CD4-positive, alpha-beta T cell (primary cell): ENCODE measurements at regions of chr1 and their contacts with region 1.

Region 1: GRCh38 chr1:108559215-108560186 is at the start of gene EEIG2:
- DNase-seq: peak; percentile 85 to 96 (median 90)
- ATAC-seq: peak; percentile 90
- H3K4me3 ChIP-seq: peak within 1 kb of the TSS; percentile 77
- H3K4me3 Mint-ChIP-seq: peak within 1 kb of the TSS; percentile 99
- H3K27ac ChIP-seq: peak within 1 kb of the TSS; percentile 57
- H3K27ac Mint-ChIP-seq: peak within 1 kb of the TSS; percentile 88
- H3K4me1 ChIP-seq: peaks cover 30% of the 10 kb centered on the region
- H3K4me1 Mint-ChIP-seq: peaks cover 47% of the 10 kb centered on the region
- H3K27me3 ChIP-seq: no peaks in the 10 kb centered on the region
- H3K27me3 Mint-ChIP-seq: no peaks in the 10 kb centered on the region
- CTCF ChIP-seq: peak; percentile 56
- total RNA-seq, gene EEIG2: 11.6 to 12.2 TPM

Region 2: DNA sequence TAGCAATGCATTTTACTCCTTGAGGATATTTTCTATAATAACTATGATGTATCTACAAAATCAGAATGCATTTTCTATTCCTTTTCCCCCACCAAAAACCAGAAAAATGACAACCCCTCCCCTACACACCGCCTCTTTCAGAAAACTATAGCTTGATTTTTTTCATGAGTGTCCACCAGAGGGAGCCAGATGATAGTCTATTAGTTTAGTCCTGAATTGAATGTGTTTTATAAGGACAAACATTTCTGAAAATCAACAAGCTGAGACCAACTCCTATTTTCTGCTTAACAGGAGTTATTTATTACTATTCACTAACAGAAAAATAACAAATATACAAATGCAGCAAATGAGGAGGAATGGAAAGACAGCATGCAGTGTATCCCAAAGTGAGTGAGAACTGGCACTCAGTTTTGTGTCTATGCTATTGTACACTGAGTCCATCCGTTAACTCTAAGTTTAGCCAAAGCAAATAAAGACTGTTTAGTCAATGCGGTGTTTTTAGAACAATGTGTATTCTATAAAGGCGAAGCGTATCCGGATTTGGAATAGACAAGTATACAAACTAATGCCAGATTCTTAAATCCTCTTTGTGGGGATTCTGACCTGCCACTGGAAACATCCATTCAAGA is 777.2 kb before region 1 on chr1:
- CTCF ChIA-PET with region 1: no interaction called
- POLR2A ChIA-PET with region 1: no interaction called
- intact Hi-C with region 1: loop called in 1 of 2 experiments (anchors 2 kb)
- DNase-seq: peak in 8 of 14 experiments; percentile 16 to 84 (median 52)
- ATAC-seq: no peak
- H3K4me3 ChIP-seq: no peak overlapping the region
- H3K4me3 Mint-ChIP-seq: no peak overlapping the region
- H3K27ac ChIP-seq: no peak overlapping the region
- H3K27ac Mint-ChIP-seq: no peak overlapping the region
- H3K4me1 ChIP-seq: peaks cover 17% of the 10 kb centered on the region
- H3K4me1 Mint-ChIP-seq: peaks cover 30% of the 10 kb centered on the region
- H3K27me3 ChIP-seq: no peaks in the 10 kb centered on the region
- H3K27me3 Mint-ChIP-seq: no peaks in the 10 kb centered on the region
- CTCF ChIP-seq: peak; percentile 86

Region 3: DNA sequence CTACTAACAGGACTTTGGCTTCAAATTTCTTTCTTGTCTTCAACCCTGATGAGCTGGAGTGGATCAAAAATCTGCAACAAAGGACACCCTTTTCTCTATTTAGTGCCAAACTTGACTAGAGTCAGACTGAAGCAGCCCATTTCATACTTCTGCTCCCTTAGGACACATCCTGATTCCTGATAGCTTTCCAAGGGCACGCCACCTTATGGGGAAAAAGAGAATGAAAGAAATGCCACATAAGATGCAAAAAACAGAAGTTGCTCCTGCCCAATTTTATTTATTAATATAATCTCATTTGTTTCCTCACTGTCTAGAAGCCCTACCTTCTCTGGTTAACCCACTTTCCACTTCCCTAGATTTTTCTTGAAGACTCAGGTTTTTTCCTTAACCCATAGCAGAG is 243.0 kb before region 1 on chr1:
- CTCF ChIA-PET with region 1: no interaction called
- POLR2A ChIA-PET with region 1: no interaction called
- intact Hi-C with region 1: no loop called
- DNase-seq: no peak
- ATAC-seq: no peak
- H3K4me3 ChIP-seq: no peak overlapping the region
- H3K4me3 Mint-ChIP-seq: no peak overlapping the region
- H3K27ac ChIP-seq: no peak overlapping the region
- H3K27ac Mint-ChIP-seq: no peak overlapping the region
- H3K4me1 ChIP-seq: no peaks in the 10 kb centered on the region
- H3K4me1 Mint-ChIP-seq: no peaks in the 10 kb centered on the region
- H3K27me3 ChIP-seq: peaks cover 0 to 12% of the 10 kb centered on the region in 2 experiments
- H3K27me3 Mint-ChIP-seq: peaks cover 18% of the 10 kb centered on the region
- CTCF ChIP-seq: no peak

Region 4: GRCh38 chr1:108503076-108503740 is 56.3 kb before region 1 on chr1:
- CTCF ChIA-PET with region 1: interaction called, 3 read pairs
- POLR2A ChIA-PET with region 1: interaction called, 11 read pairs
- intact Hi-C with region 1: no loop called
- DNase-seq: no peak
- ATAC-seq: no peak
- H3K4me3 ChIP-seq: no peak overlapping the region
- H3K4me3 Mint-ChIP-seq: no peak overlapping the region
- H3K27ac ChIP-seq: no peak overlapping the region
- H3K27ac Mint-ChIP-seq: no peak overlapping the region
- H3K4me1 ChIP-seq: peaks cover 14% of the 10 kb centered on the region
- H3K4me1 Mint-ChIP-seq: no peaks in the 10 kb centered on the region
- H3K27me3 ChIP-seq: peaks cover 0 to 6% of the 10 kb centered on the region in 2 experiments
- H3K27me3 Mint-ChIP-seq: peaks cover 36% of the 10 kb centered on the region
- CTCF ChIP-seq: no peak

Region 5: GRCh38 chr1:108570128-108570527 is 10.6 kb after region 1 on chr1:
- CTCF ChIA-PET with region 1: interaction called, 28 read pairs
- POLR2A ChIA-PET with region 1: interaction called, 3 read pairs
- intact Hi-C with region 1: no loop called
- DNase-seq: peak in 4 of 14 experiments; percentile 31 to 69 (median 58)
- ATAC-seq: peak; percentile 96
- H3K4me3 ChIP-seq: no peak overlapping the region
- H3K4me3 Mint-ChIP-seq: no peak overlapping the region
- H3K27ac ChIP-seq: no peak overlapping the region
- H3K27ac Mint-ChIP-seq: no peak overlapping the region
- H3K4me1 ChIP-seq: peaks cover 5% of the 10 kb centered on the region
- H3K4me1 Mint-ChIP-seq: peaks cover 5% of the 10 kb centered on the region
- H3K27me3 ChIP-seq: no peaks in the 10 kb centered on the region
- H3K27me3 Mint-ChIP-seq: no peaks in the 10 kb centered on the region
- CTCF ChIP-seq: peak; percentile 43

Region 6: DNA sequence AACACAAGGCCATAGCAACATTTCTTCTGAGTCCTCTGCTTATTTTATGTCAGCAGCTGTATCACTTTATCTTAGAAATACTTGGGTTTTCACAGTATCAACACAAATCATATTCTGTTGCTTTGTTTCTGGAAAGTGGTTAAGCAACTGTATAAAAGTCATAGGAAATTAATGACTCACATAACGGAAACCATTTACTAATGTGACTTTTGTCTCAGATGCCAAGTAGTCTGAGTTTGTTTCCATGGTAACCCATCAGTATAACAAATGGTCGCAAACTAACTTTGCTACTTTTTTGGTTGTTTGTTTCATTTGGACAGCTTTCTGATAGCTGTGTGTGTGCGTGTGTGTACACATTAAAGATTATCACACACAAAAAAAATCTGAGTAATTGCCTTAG is 31.5 kb after region 1 on chr1:
- CTCF ChIA-PET with region 1: interaction called, 34 read pairs
- POLR2A ChIA-PET with region 1: interaction called, 3 read pairs
- intact Hi-C with region 1: no loop called
- DNase-seq: peak in 4 of 14 experiments; percentile 26 to 90 (median 84)
- ATAC-seq: peak; percentile 83
- H3K4me3 ChIP-seq: no peak overlapping the region
- H3K4me3 Mint-ChIP-seq: peak overlapping the region; percentile 20
- H3K27ac ChIP-seq: peak overlapping the region; percentile 33 to 83
- H3K27ac Mint-ChIP-seq: peak overlapping the region; percentile 48
- H3K4me1 ChIP-seq: peaks cover 23% of the 10 kb centered on the region
- H3K4me1 Mint-ChIP-seq: peaks cover 63% of the 10 kb centered on the region
- H3K27me3 ChIP-seq: no peaks in the 10 kb centered on the region
- H3K27me3 Mint-ChIP-seq: no peaks in the 10 kb centered on the region
- CTCF ChIP-seq: no peak

Region 7: GRCh38 chr1:108643492-108644335 is 84.2 kb after region 1 on chr1:
- CTCF ChIA-PET with region 1: interaction called, 77 read pairs
- POLR2A ChIA-PET with region 1: interaction called, 50 read pairs
- intact Hi-C with region 1: loop called (anchors 1 kb)
- DNase-seq: peak in 10 of 14 experiments; percentile 32 to 86 (median 48)
- ATAC-seq: peak; percentile 24
- H3K4me3 ChIP-seq: no peak overlapping the region
- H3K4me3 Mint-ChIP-seq: peak overlapping the region; percentile 25
- H3K27ac ChIP-seq: peak overlapping the region; percentile 18 to 74
- H3K27ac Mint-ChIP-seq: peak overlapping the region; percentile 96
- H3K4me1 ChIP-seq: peaks cover 61% of the 10 kb centered on the region
- H3K4me1 Mint-ChIP-seq: peaks cover 80% of the 10 kb centered on the region
- H3K27me3 ChIP-seq: no peaks in the 10 kb centered on the region
- H3K27me3 Mint-ChIP-seq: no peaks in the 10 kb centered on the region
- CTCF ChIP-seq: peak; percentile 77

Region 8: DNA sequence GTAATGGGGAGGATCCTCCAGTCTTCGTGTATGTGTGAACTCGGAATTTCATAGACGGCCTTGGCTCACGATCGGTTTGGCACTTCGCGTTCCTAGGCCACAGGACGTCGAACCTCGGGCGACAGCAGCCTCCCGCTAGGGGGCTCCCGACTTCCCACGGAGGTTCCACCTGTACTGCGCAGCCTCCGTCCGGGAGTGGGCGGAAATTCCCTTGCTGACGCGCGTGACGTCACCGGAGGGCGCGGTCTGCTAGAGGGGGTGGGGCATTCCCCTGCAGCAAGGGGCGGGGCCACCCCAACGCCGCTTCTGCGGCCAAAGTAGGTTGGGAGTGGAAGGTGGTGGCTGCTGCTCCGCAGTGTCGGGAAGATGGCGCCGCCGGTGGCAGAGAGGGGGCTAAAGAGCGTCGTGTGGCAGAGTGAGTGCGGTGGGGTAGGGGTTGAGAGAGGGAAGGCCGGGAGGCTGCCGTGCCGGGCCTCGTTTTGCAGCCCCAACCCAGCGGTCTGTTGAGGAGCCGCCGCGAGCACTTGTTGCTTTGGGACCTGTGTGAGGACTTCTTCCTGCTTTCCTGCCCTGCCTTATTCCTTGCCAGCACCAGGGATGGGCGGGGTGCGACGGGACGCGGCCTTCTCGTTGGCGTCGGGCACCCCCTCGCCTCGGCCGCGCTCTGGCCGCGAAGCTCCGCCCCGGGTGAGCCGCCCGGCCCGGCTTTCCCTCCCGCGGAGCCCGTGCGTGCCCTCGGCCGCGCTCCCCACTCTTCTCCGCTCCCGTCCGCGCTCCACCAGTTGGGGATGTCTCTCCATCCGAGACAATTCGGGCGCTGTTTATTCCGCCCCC is 187.1 kb after region 1 on chr1 and contains the start of gene STXBP3:
- CTCF ChIA-PET with region 1: interaction called, 3 read pairs
- POLR2A ChIA-PET with region 1: no interaction called
- intact Hi-C with region 1: loop called in 1 of 2 experiments (anchors 2 kb)
- DNase-seq: peak; percentile 99 to 100 (median 100)
- ATAC-seq: peak; percentile 95
- H3K4me3 ChIP-seq: peak within 1 kb of the TSS; percentile 92
- H3K4me3 Mint-ChIP-seq: peak within 1 kb of the TSS; percentile 97
- H3K27ac ChIP-seq: peak within 1 kb of the TSS; percentile 90 to 95
- H3K27ac Mint-ChIP-seq: peak within 1 kb of the TSS; percentile 91
- H3K4me1 ChIP-seq: peaks cover 14% of the 10 kb centered on the region
- H3K4me1 Mint-ChIP-seq: peaks cover 44% of the 10 kb centered on the region
- H3K27me3 ChIP-seq: no peaks in the 10 kb centered on the region
- H3K27me3 Mint-ChIP-seq: no peaks in the 10 kb centered on the region
- CTCF ChIP-seq: peak; percentile 92
- total RNA-seq, gene STXBP3: 41.6 to 50.5 TPM